Esophagus squamous epithelium (tissue), 5 donors: ENCODE measurements at regions of chr10 and their contacts with region 1.

Region 1: GRCh38 chr10:67506082-67506756 is 189.8 kb downstream of the CTNNA3 start:
- DNase-seq: no peak
- H3K4me3 ChIP-seq: no peak overlapping the region
- H3K27ac ChIP-seq: no peak overlapping the region
- H3K4me1 ChIP-seq: no peaks in the 10 kb centered on the region
- H3K27me3 ChIP-seq: no peaks in the 10 kb centered on the region
- CTCF ChIP-seq: no peak
- POLR2A ChIP-seq: no peak

Region 2: DNA sequence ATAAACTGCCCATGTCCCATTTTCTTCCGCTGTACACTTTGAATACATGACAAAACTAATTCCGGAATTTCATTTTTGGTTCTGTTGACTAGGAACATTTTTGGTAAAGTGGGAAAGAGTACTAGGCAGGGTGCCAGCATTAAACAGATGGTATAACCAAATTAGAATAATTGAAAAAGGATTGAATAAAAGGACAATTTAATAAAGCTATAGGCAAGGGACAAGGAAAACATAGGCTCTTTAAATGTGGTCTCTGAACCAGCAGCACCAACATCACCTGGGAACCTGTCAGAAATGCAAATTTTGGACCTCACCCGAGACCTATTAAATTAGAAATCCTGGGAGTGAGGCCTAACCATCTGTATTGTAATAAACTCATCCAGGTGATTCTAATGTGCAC is 203.5 kb before region 1 on chr10:
- intact Hi-C with region 1: loop called (anchors 5 kb)
- DNase-seq: no peak
- H3K4me3 ChIP-seq: no peak overlapping the region
- H3K27ac ChIP-seq: no peak overlapping the region
- H3K4me1 ChIP-seq: no peaks in the 10 kb centered on the region
- H3K27me3 ChIP-seq: no peaks in the 10 kb centered on the region
- CTCF ChIP-seq: no peak
- POLR2A ChIP-seq: no peak

Region 3: DNA sequence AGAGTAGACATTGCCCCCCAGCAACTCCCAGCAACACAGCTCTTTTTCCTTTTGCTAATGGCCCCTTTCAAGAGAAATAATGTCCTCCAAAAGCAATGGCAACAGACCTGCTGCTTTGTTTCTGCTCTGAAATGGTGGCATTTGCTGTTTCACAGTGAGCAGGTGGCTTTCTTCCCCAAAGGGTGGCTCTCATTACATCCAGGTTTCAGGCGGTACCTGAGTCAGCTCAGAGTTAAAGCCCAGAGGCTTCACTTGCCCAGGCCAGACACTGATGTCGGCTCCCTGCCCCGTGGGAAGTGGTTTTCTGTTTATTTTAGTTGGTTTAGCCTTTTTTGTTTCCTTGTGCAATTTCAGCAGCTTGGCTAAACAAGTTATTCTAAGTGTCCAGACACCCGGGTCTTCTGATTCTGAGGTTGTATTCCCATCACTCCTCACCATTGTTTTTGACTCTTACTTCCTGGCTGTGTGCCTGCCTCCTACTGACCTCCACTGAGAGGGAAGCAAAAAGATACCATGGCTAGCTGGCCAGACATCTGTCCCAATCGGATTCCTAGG is 733.5 kb after region 1 on chr10:
- intact Hi-C with region 1: no loop called
- DNase-seq: no peak
- H3K4me3 ChIP-seq: no peak overlapping the region
- H3K27ac ChIP-seq: no peak overlapping the region
- H3K4me1 ChIP-seq: no peaks in the 10 kb centered on the region
- H3K27me3 ChIP-seq: no peaks in the 10 kb centered on the region
- CTCF ChIP-seq: no peak
- POLR2A ChIP-seq: no peak